ENCODE measurements at regions of chr11 and their contacts with region 1.

Region 1: DNA sequence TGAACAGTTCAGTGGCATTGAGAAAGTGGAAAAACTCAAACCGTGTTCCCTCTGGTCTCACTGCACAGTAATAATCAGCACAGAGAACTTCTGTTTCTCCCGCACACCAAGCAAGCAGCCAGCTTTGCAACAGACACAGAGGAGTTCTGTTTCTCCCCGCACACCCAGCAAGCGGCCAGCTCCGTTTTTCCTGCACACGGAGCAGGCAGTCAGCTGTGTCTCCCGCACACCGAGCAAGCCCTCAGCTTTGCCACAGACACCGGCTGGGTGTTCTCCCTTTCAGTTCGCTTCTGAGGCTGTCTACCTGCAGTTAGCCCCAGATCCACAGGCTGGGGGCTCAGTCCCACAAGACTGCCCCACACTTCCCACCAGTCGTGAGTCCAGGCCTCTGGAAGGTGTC is 9.9 kb upstream of the TALDO1 start:
- DNase-seq: no peak
- H3K4me3 ChIP-seq: peak overlapping the region; percentile 2
- H3K4me3 Mint-ChIP-seq: peak overlapping the region in 3 of 7 donors; percentile 12 to 58 (median 15)
- H3K27ac ChIP-seq: no peak overlapping the region
- H3K27ac Mint-ChIP-seq: peak overlapping the region in 1 of 8 donors; percentile 29
- H3K4me1 ChIP-seq: peaks cover 12% of the 10 kb centered on the region
- H3K4me1 Mint-ChIP-seq: peaks cover 10 to 14% (median 12%) of the 10 kb centered on the region in 3 donors
- H3K27me3 ChIP-seq: no peaks in the 10 kb centered on the region
- H3K27me3 Mint-ChIP-seq: peaks cover 5 to 6% of the 10 kb centered on the region in 2 donors

Region 2: GRCh38 chr11:662689-663274 is 74.6 kb before region 1 on chr11:
- CTCF ChIA-PET with region 1: no interaction called
- POLR2A ChIA-PET with region 1: no interaction called
- DNase-seq: peak in 3 of 5 donors; percentile 9 to 45 (median 12)
- H3K4me3 ChIP-seq: no peak overlapping the region
- H3K4me3 Mint-ChIP-seq: no peak overlapping the region
- H3K27ac ChIP-seq: no peak overlapping the region
- H3K27ac Mint-ChIP-seq: no peak overlapping the region
- H3K4me1 ChIP-seq: no peaks in the 10 kb centered on the region
- H3K4me1 Mint-ChIP-seq: peaks cover 0 to 2% (median 0%) of the 10 kb centered on the region in 3 donors
- H3K27me3 ChIP-seq: no peaks in the 10 kb centered on the region
- H3K27me3 Mint-ChIP-seq: no peaks in the 10 kb centered on the region

Region 3: DNA sequence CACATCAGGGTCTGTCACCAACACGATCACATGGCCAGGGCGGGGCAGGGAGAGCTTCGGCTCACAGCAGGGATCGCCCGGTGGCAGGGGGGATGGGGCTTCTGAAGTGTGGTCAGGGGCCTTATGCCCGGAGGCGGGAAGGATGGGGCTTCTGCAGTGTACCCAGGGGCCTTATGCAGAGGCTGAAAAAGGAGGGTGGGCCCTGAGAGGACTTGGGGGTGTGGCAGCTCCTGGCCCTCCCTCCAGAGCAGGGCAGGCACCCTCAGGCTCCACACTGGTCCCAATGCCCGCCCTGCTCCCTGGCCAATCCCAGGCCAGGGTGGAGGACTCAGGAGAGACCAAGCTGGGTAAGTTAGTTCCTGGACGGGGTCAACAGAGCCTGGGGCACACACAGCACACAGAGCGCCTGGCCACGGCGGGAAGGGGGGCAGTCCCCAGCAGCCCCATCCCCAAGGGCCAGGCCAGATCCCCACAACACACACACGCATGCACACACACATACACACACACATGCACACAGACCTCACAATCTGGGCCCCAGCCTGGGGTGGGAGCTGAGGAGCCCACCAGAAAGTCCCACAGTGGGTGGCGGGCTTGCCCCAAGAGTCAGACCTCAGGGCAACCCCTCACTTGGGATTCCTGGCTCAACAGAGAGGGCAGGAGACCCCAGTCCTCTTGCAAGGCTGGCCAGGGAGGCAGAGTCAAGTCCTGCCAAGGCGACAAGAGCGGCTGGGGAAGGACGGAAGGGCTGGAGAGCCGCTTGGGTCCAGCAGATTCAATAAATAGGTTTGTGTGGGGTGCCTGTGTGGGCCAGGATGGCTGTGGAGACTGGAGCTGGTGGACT is 53.6 kb after region 1 on chr11:
- CTCF ChIA-PET with region 1: no interaction called
- POLR2A ChIA-PET with region 1: interaction called, 14 read pairs
- DNase-seq: no peak
- H3K4me3 ChIP-seq: no peak overlapping the region
- H3K4me3 Mint-ChIP-seq: no peak overlapping the region
- H3K27ac ChIP-seq: no peak overlapping the region
- H3K27ac Mint-ChIP-seq: peak overlapping the region in 1 of 8 donors; percentile 92
- H3K4me1 ChIP-seq: peaks cover 14% of the 10 kb centered on the region
- H3K4me1 Mint-ChIP-seq: peaks cover 2 to 18% (median 4%) of the 10 kb centered on the region in 3 donors
- H3K27me3 ChIP-seq: no peaks in the 10 kb centered on the region
- H3K27me3 Mint-ChIP-seq: peaks cover 3% of the 10 kb centered on the region in 2 donors